Gastrocnemius medialis (tissue), 4 donors: ENCODE measurements at regions of chr5 and their contacts with region 1.

Region 1: DNA sequence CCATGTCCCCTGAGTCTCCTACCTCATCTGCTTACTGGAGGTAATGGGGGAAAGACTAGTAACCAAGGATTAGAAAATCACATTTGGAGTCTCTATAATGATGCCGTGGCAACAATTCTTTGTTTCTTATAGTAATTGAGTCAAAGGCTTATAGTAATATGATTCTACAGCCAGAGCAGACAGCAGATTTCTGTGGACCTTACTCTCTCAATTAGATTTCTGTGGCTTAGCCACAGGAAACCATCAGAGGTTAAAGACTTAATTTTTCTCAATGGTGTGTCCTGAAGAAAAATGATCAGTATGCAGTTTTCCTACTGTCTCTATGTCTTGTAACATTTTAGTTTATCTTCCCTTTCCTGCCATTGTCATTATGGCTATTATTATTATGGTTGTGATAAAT is 59.3 kb upstream of the CD180 start:
- DNase-seq: no peak
- ATAC-seq: no peak
- H3K4me3 ChIP-seq: no peak overlapping the region
- H3K27ac ChIP-seq: no peak overlapping the region
- H3K4me1 ChIP-seq: peaks cover 3 to 4% of the 10 kb centered on the region in 2 donors
- H3K27me3 ChIP-seq: no peaks in the 10 kb centered on the region
- CTCF ChIP-seq: no peak
- POLR2A ChIP-seq: no peak

Region 2: DNA sequence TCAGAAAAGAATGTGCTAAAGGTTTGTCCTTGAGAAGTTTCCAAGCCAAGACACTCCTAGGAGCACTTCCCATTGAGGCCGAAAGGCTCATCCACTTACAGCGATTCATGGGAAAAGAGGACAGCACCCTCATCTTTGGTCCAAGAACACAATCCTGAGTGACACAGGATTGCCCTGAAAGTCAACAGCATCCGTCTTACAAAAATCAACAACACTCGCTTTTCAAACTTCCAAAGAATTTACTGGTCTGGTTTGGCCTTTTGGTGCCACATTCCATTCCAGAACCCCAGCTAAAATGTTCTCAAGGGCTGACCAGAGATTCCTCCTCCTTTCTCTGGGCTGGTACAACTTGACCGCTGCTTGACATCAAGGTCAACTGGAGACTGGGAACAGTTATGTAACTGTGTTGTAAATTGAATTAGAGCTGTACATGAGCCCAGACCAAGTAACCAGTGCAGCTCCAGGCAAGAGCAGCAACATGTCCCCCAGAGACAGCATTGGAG is 543.9 kb after region 1 on chr5:
- in situ Hi-C with region 1: loop called in 1 of 4 experiments (anchors 25 kb)
- intact Hi-C with region 1: loop called (anchors 5 kb)
- DNase-seq: peak; percentile 24 to 64
- ATAC-seq: peak; percentile 73 to 83
- H3K4me3 ChIP-seq: no peak overlapping the region
- H3K27ac ChIP-seq: peak overlapping the region; percentile 41 to 60 (median 46)
- H3K4me1 ChIP-seq: peaks cover 0 to 3% of the 10 kb centered on the region in 2 donors
- H3K27me3 ChIP-seq: no peaks in the 10 kb centered on the region
- CTCF ChIP-seq: no peak
- POLR2A ChIP-seq: no peak